Activated CD4-positive, alpha-beta memory T cell treated with anti-CD3 and anti-CD28 coated beads for 36 hours (primary cell): ENCODE measurements at regions of chr3 and their contacts with region 1.

Region 1: GRCh38 chr3:107414325-107414964 is 37.2 kb downstream of the CCDC54 start:
- DNase-seq: no peak
- H3K4me3 Mint-ChIP-seq: no peak overlapping the region
- H3K27ac Mint-ChIP-seq: no peak overlapping the region
- H3K4me1 Mint-ChIP-seq: peaks cover 9% of the 10 kb centered on the region
- H3K27me3 Mint-ChIP-seq: no peaks in the 10 kb centered on the region

Region 2: GRCh38 chr3:107429320-107430181 is 15.1 kb after region 1 on chr3:
- CTCF ChIA-PET with region 1: interaction called, 7 read pairs
- POLR2A ChIA-PET with region 1: no interaction called
- intact Hi-C with region 1: loop called (anchors 1 kb)
- DNase-seq: peak; percentile 71
- H3K4me3 Mint-ChIP-seq: peak overlapping the region; percentile 62
- H3K27ac Mint-ChIP-seq: no peak overlapping the region
- H3K4me1 Mint-ChIP-seq: peaks cover 12% of the 10 kb centered on the region
- H3K27me3 Mint-ChIP-seq: peaks cover 3% of the 10 kb centered on the region